Activated T-helper 2 cell treated with anti-CD3 and anti-CD28 coated beads, Interferon-gamma antibody, Interleukin-2, Interleukin-4, amounts not matched to agents 10 μg/mL and 5 μg/mL and 100 μg/mL, durations not matched to agents 14 hours and 24 hours and 36 hours (primary cell): ENCODE measurements at regions of chr1 and their contacts with region 1.

Region 1: DNA sequence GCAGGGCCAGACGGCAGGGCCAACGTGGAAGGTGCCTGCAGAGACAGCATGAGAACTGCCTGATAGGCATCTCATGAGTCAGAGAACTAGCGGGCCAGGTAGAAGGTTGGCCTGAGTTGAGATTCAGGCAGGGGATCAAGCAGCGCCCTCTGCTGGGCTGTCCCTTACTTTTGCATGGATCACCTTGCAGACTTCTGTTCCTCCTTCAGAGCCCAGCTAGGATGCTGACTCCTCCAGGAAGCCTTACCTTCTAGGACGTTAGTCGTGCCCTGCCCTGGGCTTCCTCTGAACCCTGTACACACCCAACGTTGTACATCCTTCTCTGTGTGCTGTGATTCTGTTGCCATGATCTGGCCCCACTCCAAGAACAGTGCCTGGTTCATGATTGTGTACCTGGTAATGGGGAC is 231.3 kb upstream of the VAMP3 start:
- DNase-seq: peak; percentile 18
- H3K4me3 Mint-ChIP-seq: no peak overlapping the region
- H3K27ac Mint-ChIP-seq: no peak overlapping the region
- H3K4me1 Mint-ChIP-seq: peaks cover 6% of the 10 kb centered on the region
- H3K27me3 Mint-ChIP-seq: no peaks in the 10 kb centered on the region

Region 2: DNA sequence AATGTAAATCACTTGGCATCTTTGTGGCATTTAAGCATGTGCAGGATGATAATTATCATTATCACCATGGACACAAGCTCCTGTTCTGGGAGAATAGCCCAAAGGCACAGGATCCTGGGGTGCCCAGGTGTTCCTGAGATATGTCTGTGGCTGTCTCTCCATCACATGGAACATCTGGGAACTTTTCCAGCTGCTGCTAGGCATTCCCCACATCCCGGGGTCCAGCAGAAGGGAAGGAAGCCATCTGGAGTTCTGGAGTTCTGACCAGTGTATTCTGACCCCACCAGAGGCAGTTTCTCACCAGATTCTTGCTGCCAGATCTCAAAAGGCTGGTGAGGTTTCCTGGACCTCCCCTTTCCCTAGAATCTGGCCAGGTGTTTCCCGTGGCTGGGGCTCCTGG is 28.4 kb before region 1 on chr1:
- intact Hi-C with region 1: loop called (anchors 1 kb)
- DNase-seq: no peak
- H3K4me3 Mint-ChIP-seq: no peak overlapping the region
- H3K27ac Mint-ChIP-seq: no peak overlapping the region
- H3K4me1 Mint-ChIP-seq: no peaks in the 10 kb centered on the region
- H3K27me3 Mint-ChIP-seq: no peaks in the 10 kb centered on the region